Activated CD4-positive, alpha-beta T cell treated with anti-CD3 and anti-CD28 coated beads, Interleukin-2, amount 10 ng/mL, durations not matched to agents 24 days and 14 days (primary cell): ENCODE measurements at regions of chr7 and their contacts with region 1.

Region 1: GRCh38 chr7:44082541-44083207 is 344 bp upstream of the POLM start:
- DNase-seq: peak; percentile 99
- H3K4me3 Mint-ChIP-seq: peak overlapping the region; percentile 85
- H3K27ac Mint-ChIP-seq: peak overlapping the region; percentile 80
- H3K4me1 Mint-ChIP-seq: peaks cover 26% of the 10 kb centered on the region
- H3K27me3 Mint-ChIP-seq: no peaks in the 10 kb centered on the region

Region 2: DNA sequence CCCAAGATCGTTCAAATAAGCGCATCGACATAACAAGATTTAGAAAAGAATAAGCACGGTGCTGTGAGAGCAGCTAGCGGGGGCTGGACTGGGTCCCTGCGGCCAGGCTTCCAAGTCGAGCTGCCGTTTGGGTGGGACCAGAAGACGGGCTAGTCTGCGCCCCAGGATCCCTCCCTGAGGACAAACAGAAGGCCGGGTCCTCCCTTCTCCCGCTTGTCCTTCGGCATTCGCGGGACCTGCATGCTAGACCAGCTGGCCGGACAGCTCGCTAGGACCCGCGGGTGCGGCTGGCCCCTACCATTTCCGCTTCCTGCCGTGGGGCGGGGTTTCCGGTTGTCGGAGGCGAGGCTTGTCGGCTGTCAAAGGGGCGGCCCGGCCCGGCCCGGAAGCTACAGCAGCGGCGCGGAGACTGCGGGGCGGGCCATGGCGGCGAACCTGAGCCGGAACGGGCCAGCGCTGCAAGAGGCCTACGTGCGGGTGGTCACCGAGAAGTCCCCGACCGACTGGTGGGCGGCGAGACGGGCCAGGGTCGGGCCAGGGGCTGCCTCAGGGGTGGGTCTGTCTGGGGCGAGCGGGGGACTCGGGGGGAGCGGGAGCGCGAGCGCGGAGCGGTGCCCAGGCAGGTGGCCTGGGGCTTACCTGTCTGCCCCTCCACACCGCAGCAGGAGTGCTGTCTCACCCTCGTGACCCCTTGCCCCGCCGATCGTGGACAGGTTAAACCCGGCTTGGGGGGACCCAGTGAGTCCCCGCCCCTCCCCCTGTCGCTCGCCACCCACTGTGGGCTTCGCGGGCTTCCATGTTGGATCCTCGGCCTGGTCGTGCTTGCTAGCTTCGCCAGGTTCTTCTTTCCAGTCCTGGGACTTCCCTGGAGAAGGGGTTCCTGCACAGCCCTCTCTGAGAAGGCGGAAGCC is 38.1 kb before region 1 on chr7 and contains the start of gene DBNL:
- intact Hi-C with region 1: loop called (anchors 1 kb)
- DNase-seq: peak; percentile 99
- H3K4me3 Mint-ChIP-seq: peak within 1 kb of the TSS; percentile 91
- H3K27ac Mint-ChIP-seq: peak within 1 kb of the TSS; percentile 89
- H3K4me1 Mint-ChIP-seq: peaks cover 40% of the 10 kb centered on the region
- H3K27me3 Mint-ChIP-seq: no peaks in the 10 kb centered on the region
- total RNA-seq, gene DBNL: 127 and 131 TPM in 2 replicates

Region 3: DNA sequence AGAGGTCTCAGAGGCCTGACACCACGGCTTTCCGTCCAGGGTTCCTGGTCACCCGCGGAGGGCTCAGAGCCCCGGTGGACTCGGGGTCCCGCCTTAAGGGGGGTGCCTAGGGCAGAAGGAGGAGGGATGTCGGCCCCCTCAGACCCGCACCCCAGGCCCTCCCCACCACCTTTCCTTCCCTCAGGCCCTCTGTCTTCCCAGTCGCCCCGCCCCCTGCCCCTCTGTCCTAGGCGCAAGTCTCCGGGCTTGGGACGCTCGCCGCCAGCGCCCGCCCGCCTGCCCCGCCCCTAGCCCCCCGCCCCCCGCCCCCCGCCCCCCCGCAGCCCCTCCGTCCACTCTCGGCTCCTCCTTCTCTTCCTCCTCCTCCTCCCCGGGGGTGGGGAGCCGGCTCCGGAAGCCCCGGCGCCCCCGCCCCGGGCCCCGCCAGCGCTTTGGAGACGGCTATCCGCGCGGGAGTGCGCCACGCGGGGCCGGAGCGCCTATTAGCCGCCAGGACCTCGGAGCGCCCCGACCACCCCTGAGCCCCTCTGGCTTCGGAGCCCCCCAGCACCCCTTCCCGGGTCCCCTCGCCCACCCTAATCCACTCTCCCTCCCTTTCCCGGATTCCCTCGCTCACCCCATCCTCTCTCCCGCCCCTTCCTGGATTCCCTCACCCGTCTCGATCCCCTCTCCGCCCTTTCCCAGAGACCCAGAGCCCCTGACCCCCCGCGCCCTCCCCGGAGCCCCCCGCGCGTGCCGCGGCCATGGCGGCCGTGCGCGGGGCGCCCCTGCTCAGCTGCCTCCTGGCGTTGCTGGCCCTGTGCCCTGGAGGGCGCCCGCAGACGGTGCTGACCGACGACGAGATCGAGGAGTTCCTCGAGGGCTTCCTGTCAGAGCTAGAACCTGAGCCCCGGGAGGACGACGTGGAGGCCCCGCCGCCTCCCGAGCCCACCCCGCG is 21.5 kb after region 1 on chr7 and contains the start of gene AEBP1:
- intact Hi-C with region 1: loop called (anchors 1 kb)
- DNase-seq: peak; percentile 77
- H3K4me3 Mint-ChIP-seq: peak within 1 kb of the TSS; percentile 76
- H3K27ac Mint-ChIP-seq: peak within 1 kb of the TSS; percentile 35
- H3K4me1 Mint-ChIP-seq: peaks cover 7% of the 10 kb centered on the region
- H3K27me3 Mint-ChIP-seq: peaks cover 17% of the 10 kb centered on the region
- total RNA-seq, gene AEBP1: 21.6 and 22.2 TPM in 2 replicates

Region 4: GRCh38 chr7:44145969-44146911 is 63.6 kb after region 1 on chr7:
- intact Hi-C with region 1: loop called (anchors 2 kb)
- DNase-seq: peak; percentile 91
- H3K4me3 Mint-ChIP-seq: peak overlapping the region; percentile 82
- H3K27ac Mint-ChIP-seq: peak overlapping the region; percentile 82
- H3K4me1 Mint-ChIP-seq: peaks cover 10% of the 10 kb centered on the region
- H3K27me3 Mint-ChIP-seq: peaks cover 10% of the 10 kb centered on the region

Region 5: GRCh38 chr7:44257618-44258422 is 175.1 kb after region 1 on chr7:
- intact Hi-C with region 1: loop called (anchors 5 kb)
- DNase-seq: peak; percentile 90
- H3K4me3 Mint-ChIP-seq: peak overlapping the region; percentile 54
- H3K27ac Mint-ChIP-seq: peak overlapping the region; percentile 95
- H3K4me1 Mint-ChIP-seq: peaks cover 37% of the 10 kb centered on the region
- H3K27me3 Mint-ChIP-seq: no peaks in the 10 kb centered on the region

Region 6: DNA sequence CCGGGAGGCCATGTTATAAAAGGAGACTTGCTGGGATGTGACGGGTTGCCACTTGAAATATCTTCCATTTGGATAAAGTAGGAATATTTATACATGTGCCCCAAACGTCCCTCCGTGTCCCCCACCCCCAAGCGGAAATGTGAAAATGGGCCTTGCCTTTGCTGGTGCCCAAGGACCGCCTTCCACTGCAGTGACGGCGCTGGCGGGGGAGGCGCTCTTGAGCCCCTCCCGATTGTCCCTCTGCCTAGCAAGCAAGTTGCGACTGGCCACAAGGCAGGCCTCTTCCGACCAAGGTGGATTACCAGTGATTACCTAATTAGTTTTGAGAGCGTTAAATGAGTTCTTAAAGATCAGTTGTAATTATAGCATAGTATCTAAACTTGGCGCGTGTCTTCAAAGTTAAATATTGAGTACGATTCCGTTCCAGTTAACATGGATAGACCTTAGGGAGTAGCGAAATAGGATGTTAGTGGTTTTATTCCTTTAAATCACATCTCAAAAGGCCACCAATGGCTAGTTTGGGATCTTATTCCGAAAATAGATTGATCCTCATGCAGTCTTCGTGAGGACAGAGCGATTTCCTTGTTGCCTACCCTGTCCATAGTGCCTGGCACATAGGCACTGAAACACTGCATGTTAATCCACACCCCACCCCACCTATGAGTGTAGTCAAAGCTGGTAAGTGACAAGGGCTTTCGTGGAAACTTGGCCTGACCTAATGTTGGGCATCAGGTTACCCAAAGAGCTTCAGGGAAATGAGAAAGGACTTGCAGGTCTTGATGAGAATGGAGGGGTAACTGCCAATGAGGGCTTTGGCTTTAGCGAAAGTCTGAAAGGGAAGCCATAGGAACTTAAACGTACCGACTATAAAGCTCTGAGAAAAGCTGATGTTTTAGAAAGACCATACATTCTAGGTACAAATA is 714.9 kb after region 1 on chr7:
- intact Hi-C with region 1: loop called (anchors 2 kb)
- DNase-seq: peak; percentile 95
- H3K4me3 Mint-ChIP-seq: peak overlapping the region; percentile 98
- H3K27ac Mint-ChIP-seq: peak overlapping the region; percentile 97
- H3K4me1 Mint-ChIP-seq: peaks cover 31% of the 10 kb centered on the region
- H3K27me3 Mint-ChIP-seq: no peaks in the 10 kb centered on the region